HCT116 (cell line): ENCODE measurements at regions of chr11 and their contacts with region 1.

Region 1: DNA sequence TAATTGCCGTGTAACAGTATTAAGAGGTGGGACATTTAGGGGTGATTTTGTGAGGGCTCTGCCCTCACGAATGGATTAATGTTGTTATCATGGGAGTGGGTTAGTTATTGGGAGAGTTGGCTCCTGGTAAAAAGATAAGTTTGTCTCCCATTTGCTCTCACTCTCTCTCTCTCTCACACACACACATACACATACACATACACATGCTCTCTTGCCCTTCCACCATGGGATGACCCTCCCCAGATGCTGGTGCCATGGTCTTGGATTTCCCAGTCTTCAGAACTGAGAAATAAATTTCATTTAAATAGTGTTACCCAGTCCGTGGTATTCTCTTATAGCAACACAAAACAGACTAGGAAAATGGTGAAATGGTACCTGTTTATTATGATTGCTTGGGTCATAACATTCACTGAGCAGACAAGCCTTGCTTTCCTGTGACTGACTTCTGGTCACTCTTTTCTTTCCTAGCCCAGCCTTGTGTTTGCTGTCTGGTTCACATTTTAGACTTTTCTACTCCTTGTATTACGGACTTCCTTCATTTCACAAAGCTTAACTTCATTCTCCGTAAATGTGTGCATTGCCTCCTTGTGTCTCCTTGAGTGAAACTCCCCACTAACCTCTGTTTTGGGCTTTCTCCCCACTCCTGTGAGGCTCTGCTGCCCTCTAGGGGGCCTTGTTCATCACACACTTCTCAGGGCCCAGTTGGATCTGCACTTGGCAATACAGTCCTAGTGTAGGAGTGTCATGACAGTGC is 206.5 kb upstream of the CTSC start:
- DNase-seq: peak; percentile 81
- ATAC-seq: peak; percentile 100
- H3K4me3 ChIP-seq: no peak overlapping the region
- H3K27ac ChIP-seq: no peak overlapping the region
- H3K4me1 ChIP-seq: peaks cover 0 to 2% of the 10 kb centered on the region in 2 experiments; a peak in 1 of 4 replicates
- H3K27me3 ChIP-seq: no peaks in the 10 kb centered on the region
- CTCF ChIP-seq: peak; percentile 93 to 99 (median 98)
- POLR2A ChIP-seq: no peak
- RAD21 ChIP-seq: peak; percentile 100

Region 2: DNA sequence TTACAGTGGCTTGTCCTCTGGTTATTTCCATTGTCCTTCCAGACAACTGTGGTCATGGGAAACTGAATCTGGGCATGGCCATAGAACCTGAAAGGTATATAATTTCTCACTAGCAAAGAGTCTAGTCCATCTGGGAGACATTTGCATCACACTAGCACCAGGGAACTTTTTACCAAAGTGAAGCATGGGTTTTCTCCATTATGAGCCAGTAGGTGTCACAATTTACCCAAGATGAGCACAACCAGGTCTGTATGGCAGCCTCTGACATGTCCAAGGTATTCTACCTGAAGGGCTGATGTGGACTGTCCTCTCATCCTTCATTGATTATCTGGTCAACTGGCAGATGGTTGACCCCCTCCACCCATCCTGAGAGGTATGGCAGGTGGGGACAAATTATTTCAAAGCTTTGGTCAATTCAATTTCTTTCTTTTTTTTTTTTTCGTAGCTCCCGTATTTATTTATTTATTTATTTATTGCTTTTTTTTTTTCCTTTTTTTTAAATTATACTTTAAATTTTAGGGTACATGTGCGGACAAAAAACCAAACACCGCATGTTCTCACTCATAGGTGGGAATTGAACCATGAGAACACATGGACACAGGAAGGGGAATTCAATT is 1080.5 kb before region 1 on chr11:
- CTCF ChIA-PET with region 1: no interaction called
- POLR2A ChIA-PET with region 1: no interaction called
- RAD21 ChIA-PET with region 1: no interaction called
- intact Hi-C with region 1: loop called (anchors 2 kb)
- DNase-seq: peak; percentile 42
- ATAC-seq: peak; percentile 91
- H3K4me3 ChIP-seq: no peak overlapping the region
- H3K27ac ChIP-seq: no peak overlapping the region
- H3K4me1 ChIP-seq: no peaks in the 10 kb centered on the region
- H3K27me3 ChIP-seq: peaks cover 24% of the 10 kb centered on the region
- CTCF ChIP-seq: peak; percentile 27 to 65 (median 43); a peak in 5 of 6 replicates
- POLR2A ChIP-seq: no peak
- RAD21 ChIP-seq: peak; percentile 71

Region 3: DNA sequence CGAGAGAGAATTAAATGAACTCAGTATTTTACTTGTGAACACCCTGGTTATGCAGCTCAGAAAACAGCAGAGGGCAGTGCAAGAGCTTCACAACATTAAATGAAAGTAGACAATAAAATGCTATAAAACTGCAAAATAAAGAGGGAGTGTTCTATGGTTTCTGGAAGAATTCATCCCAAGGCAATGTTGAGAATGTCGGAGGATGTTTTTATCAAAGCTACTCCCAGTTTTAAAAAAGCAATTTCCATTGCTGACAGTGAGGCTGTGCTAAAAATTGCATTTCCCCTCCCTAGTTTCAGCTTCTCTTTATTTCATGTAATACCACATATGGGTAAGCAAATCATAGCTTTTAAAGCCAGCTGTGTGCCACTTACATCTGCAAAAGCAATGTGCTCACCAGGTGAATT is 665.7 kb before region 1 on chr11:
- CTCF ChIA-PET with region 1: interaction called, 6 read pairs
- POLR2A ChIA-PET with region 1: no interaction called
- RAD21 ChIA-PET with region 1: interaction called in 1 of 2 experiments, 3 read pairs
- intact Hi-C with region 1: loop called (anchors 1 kb)
- DNase-seq: peak; percentile 21
- ATAC-seq: peak; percentile 66
- H3K4me3 ChIP-seq: no peak overlapping the region
- H3K27ac ChIP-seq: no peak overlapping the region
- H3K4me1 ChIP-seq: no peaks in the 10 kb centered on the region
- H3K27me3 ChIP-seq: no peaks in the 10 kb centered on the region
- CTCF ChIP-seq: peak; percentile 42 to 64 (median 53); a peak in 5 of 6 replicates
- POLR2A ChIP-seq: no peak
- RAD21 ChIP-seq: peak; percentile 66

Region 4: GRCh38 chr11:88103337-88104206 is 440.5 kb before region 1 on chr11:
- CTCF ChIA-PET with region 1: interaction called, 8 read pairs
- POLR2A ChIA-PET with region 1: no interaction called
- RAD21 ChIA-PET with region 1: interaction called in 1 of 2 experiments, 4 read pairs
- intact Hi-C with region 1: loop called (anchors 1 kb)
- DNase-seq: peak; percentile 85
- ATAC-seq: peak; percentile 98
- H3K4me3 ChIP-seq: no peak overlapping the region
- H3K27ac ChIP-seq: no peak overlapping the region
- H3K4me1 ChIP-seq: peaks cover 0 to 10% of the 10 kb centered on the region in 2 experiments; a peak in 2 of 4 replicates
- H3K27me3 ChIP-seq: no peaks in the 10 kb centered on the region
- CTCF ChIP-seq: peak; percentile 92 to 97 (median 93)
- POLR2A ChIP-seq: no peak
- RAD21 ChIP-seq: peak; percentile 74

Region 5: GRCh38 chr11:88337181-88337986 is 206.7 kb before region 1 on chr11 and contains the start of gene CTSC:
- CTCF ChIA-PET with region 1: interaction called, 3 read pairs
- POLR2A ChIA-PET with region 1: no interaction called
- RAD21 ChIA-PET with region 1: interaction called in 1 of 2 experiments, 3 read pairs
- intact Hi-C with region 1: loop called (anchors 1 kb)
- DNase-seq: peak; percentile 53
- ATAC-seq: peak; percentile 91
- H3K4me3 ChIP-seq: peak within 1 kb of the TSS; percentile 79 to 91
- H3K27ac ChIP-seq: peak within 1 kb of the TSS; percentile 52
- H3K4me1 ChIP-seq: peaks cover 3 to 19% of the 10 kb centered on the region in 2 experiments; a peak in 3 of 4 replicates
- H3K27me3 ChIP-seq: no peaks in the 10 kb centered on the region
- CTCF ChIP-seq: no peak
- POLR2A ChIP-seq: peak; percentile 93
- RAD21 ChIP-seq: no peak
- total RNA-seq, gene CTSC: 38.0 TPM